Mammary epithelial cell (primary cell): ENCODE measurements at regions of chr14 and their contacts with region 1.

Region 1: DNA sequence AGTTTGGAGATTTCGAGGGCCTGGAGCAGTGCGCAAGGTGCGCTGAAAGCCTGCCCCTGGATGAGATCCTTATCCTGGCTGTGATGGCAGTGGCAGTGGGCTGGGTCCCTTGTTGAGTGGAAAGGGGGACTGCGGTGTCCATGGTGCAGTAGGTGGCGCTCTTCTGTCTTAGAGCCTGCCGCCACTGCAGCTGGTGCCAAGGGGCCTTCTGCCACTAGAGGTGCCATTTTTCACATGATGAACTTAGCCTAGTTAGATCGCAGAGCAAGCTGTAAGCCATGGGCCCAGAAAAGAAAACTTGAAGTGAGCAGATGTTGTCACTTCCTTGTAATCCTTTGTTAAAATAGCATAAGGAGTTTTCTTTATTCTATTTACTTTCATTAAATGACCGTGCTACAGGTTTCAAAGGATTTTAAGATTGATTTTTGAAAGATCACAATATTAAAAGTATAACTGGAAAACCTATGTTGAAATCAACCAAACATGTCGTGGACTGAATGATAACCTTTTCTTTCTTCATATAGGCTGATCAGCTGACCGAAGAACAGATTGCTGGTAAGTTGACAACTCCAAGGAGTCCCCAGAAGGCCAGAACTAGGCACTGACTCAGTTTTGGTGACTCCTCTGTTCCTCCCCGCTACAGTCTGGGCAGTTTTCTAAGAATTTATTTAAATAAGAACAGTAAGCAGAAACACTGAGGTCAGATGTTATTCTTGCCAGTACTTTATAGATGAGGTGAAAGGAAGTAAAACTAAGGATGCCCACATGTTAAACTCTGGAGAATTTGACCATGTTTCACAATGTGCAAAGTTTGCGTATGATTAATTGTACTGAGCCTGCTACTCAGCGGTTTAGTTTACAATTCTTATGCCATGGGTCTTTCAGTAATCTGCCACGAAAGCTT is 3.0 kb downstream of the CALM1 start:
- DNase-seq: peak; percentile 78
- H3K4me3 ChIP-seq: peak overlapping the region; percentile 40 to 98 (median 91)
- H3K27ac ChIP-seq: peak overlapping the region; percentile 71
- H3K4me1 ChIP-seq: peaks cover 37% of the 10 kb centered on the region
- H3K27me3 ChIP-seq: no peaks in the 10 kb centered on the region
- CTCF ChIP-seq: peak; percentile 100

Region 2: DNA sequence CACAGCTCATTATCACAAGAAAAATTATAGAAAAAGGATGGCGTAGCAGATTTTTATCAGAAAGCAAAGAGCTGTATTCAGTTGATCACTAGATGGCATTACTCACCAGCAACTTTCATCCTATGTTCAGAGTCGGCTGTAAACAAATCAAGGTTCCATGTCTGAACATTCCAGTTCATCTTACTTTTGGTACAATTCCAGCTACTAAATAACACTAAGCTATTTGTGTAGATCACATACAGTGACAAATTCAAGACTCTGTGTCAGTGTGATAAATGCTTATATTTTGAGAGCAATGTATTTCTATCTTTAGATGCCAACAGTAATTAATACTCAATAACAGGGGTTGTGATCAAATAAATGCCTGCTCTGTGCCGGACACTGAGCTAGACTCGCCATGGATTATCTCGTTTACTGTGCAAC is 98.1 kb before region 1 on chr14:
- CTCF ChIA-PET with region 1: interaction called, 3 read pairs
- dilution Hi-C with region 1: no loop called
- in situ Hi-C with region 1: no loop called
- intact Hi-C with region 1: loop called (anchors 1 kb)
- DNase-seq: peak; percentile 25
- H3K4me3 ChIP-seq: no peak overlapping the region
- H3K27ac ChIP-seq: no peak overlapping the region
- H3K4me1 ChIP-seq: no peaks in the 10 kb centered on the region
- H3K27me3 ChIP-seq: no peaks in the 10 kb centered on the region
- CTCF ChIP-seq: peak; percentile 35 to 56

Region 3: DNA sequence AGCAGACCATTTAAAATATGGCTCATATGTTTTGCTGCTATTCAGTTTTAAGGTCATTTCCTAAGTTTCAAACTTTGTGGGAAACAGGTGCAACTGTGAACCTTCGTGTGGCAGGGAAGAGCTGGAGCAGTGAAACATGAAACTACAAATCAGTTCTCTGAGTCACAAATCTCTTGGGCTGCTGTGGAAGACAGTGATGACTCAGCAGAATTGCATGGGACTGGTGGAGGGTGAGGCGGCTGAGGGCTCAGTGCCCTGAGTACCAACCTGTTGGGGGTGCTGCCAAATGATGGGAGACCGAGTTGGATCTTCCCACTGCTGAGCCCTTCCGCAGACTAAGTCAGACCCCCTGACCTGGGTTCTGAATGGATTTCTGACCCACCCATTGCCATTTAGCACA is 11.4 kb before region 1 on chr14:
- CTCF ChIA-PET with region 1: interaction called, 3 read pairs
- dilution Hi-C with region 1: no loop called
- in situ Hi-C with region 1: no loop called
- intact Hi-C with region 1: loop called (anchors 1 kb)
- DNase-seq: peak; percentile 80
- H3K4me3 ChIP-seq: no peak overlapping the region
- H3K27ac ChIP-seq: no peak overlapping the region
- H3K4me1 ChIP-seq: peaks cover 19% of the 10 kb centered on the region
- H3K27me3 ChIP-seq: no peaks in the 10 kb centered on the region
- CTCF ChIP-seq: peak in 1 of 2 donors; percentile 7

Region 4: GRCh38 chr14:90677484-90678050 is 277.8 kb after region 1 on chr14:
- CTCF ChIA-PET with region 1: no interaction called
- dilution Hi-C with region 1: no loop called
- in situ Hi-C with region 1: no loop called
- intact Hi-C with region 1: loop called (anchors 5 kb)
- DNase-seq: peak; percentile 40
- H3K4me3 ChIP-seq: no peak overlapping the region
- H3K27ac ChIP-seq: no peak overlapping the region
- H3K4me1 ChIP-seq: peaks cover 20% of the 10 kb centered on the region
- H3K27me3 ChIP-seq: no peaks in the 10 kb centered on the region
- CTCF ChIP-seq: no peak

Region 5: GRCh38 chr14:90758028-90758889 is 358.5 kb after region 1 on chr14:
- CTCF ChIA-PET with region 1: no interaction called
- dilution Hi-C with region 1: no loop called
- in situ Hi-C with region 1: no loop called
- intact Hi-C with region 1: loop called (anchors 1 kb)
- DNase-seq: peak; percentile 88
- H3K4me3 ChIP-seq: peak overlapping the region; percentile 44 to 53 (median 45)
- H3K27ac ChIP-seq: peak overlapping the region; percentile 55
- H3K4me1 ChIP-seq: peaks cover 7% of the 10 kb centered on the region
- H3K27me3 ChIP-seq: no peaks in the 10 kb centered on the region
- CTCF ChIP-seq: peak; percentile 57 to 90